ENCODE measurements at regions of chr1 and their contacts with region 1.

Region 1: DNA sequence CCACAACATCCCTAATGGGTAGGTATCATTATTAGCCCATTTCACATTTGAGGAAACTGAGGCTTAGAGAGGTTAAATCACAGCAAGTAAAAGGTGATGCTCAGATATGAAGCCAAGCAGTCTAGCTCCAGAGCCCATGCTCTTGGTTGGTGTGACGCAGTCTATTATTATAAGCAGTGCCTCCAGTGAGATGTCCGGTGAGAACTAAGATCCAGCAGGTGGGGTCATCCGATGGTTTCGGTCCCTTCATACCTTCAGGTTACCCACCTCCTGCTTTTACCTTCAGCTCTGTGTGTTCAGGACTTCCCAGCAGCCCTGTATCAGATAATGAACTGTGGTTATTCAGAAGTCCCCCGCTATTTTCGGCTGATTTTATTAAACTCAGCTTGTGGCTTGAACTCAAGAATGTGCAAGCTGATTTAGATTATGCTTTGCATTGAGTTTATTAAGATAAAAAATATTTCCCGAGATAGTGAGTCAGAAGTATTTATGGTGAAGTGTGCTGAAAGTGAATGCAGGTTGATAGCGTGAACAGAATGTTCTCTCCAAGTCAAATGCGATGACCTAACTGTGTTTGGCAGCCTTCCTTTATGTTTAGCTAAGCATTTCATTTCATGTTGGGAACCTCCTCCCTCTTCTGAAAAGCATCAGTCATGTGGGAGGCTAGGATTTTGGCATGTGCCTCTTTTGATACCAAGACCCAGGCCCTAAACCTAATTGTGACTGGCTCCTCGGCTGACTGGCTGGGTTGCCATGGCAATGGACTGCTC is 160.9 kb upstream of the UBE2U start:
- DNase-seq: no peak

Region 2: GRCh38 chr1:63698001-63698838 is 344.3 kb before region 1 on chr1:
- intact Hi-C with region 1: loop called (anchors 5 kb)
- DNase-seq: peak; percentile 80

Region 3: GRCh38 chr1:63847308-63847910 is 195.1 kb before region 1 on chr1:
- intact Hi-C with region 1: no loop called
- DNase-seq: no peak

Region 4: GRCh38 chr1:63920154-63921117 is 122.1 kb before region 1 on chr1:
- intact Hi-C with region 1: loop called (anchors 2 kb)
- DNase-seq: no peak

Region 5: DNA sequence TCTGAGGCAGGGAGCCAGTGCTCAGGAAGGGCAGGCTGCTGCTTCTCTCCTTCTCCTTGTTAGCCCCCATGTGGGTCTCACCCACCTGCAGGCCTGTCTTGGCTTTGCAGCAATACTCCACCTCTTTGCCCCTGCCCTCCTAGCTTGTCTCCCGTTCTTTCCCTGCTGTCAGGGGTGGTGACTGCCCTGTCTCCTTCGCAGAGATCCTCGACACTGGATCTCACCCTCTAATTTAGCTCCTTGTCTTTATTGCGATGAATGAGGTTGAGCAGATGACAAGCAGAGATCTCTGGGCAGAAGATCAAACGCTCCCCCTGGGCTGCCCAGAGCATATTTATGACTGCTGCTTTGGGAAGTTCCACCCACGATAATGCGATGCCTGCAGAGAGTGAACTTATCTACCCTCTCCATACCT is 69.5 kb before region 1 on chr1:
- intact Hi-C with region 1: loop called (anchors 5 kb)
- DNase-seq: no peak

Measured in cardiac septum (tissue), 1 donor.